IMR-90 (cell line): ENCODE measurements at regions of chr12 and their contacts with region 1.

Region 1: DNA sequence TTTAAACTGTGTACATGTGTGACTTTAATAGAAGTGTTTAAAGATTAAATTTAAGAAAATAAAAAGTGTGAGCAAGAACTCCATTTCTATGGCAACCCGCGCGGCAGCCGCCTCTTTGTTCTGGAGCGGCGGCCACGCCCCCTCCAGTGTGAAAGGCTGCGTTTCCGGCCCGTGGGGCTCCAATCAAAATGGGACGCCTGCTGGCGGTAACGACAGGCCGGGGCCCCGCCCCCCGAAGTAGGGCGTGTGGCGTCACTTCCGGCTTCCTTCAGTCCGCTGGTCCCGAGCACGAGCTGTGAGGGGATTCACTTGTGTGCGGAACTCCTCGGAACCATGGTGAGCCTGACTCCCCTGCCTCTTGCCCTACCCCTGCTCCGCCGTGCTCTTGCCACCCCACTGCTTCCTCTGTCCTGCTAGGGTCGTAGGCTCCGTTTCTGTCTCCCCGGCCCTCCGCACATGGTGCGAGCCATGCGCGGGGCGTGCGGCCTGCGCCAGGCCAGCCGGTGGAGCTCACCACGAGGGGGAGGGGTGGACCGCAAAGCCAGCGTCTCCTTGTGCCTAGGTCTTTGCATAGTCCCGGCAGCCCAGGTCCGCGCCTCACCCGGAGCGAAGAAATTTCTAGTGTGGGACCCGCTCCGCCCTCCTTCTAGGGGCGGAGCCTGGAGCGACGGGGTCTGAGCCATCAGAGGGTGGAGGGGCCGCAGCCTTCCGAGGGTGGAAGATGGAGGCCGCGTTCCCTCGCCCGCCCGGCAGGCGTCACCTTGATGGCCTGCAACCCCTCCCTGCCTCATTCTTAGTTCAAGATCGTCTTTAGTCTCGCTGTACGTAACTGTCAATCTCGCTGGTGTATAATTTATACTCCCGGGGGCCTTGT is at the start of gene CCT2:
- DNase-seq: peak; percentile 94
- ATAC-seq: peak; percentile 97
- H3K4me3 ChIP-seq: peak within 1 kb of the TSS; percentile 52
- H3K27ac ChIP-seq: peak within 1 kb of the TSS; percentile 60
- H3K4me1 ChIP-seq: no peaks in the 10 kb centered on the region
- H3K27me3 ChIP-seq: no peaks in the 10 kb centered on the region
- CTCF ChIP-seq: peak; percentile 45
- POLR2A ChIP-seq: peak; percentile 96
- RAD21 ChIP-seq: peak; percentile 44
- total RNA-seq, gene CCT2: 565 and 651 TPM in 2 replicates

Region 2: GRCh38 chr12:68831272-68831671 is 754.2 kb before region 1 on chr12:
- CTCF ChIA-PET with region 1: no interaction called
- POLR2A ChIA-PET with region 1: no interaction called
- dilution Hi-C with region 1: no loop called
- in situ Hi-C with region 1: loop called (anchors 25 kb)
- intact Hi-C with region 1: no loop called
- DNase-seq: no peak
- ATAC-seq: no peak
- H3K4me3 ChIP-seq: no peak overlapping the region
- H3K27ac ChIP-seq: no peak overlapping the region
- H3K4me1 ChIP-seq: peaks cover 2% of the 10 kb centered on the region
- H3K27me3 ChIP-seq: no peaks in the 10 kb centered on the region
- CTCF ChIP-seq: no peak
- POLR2A ChIP-seq: no peak
- RAD21 ChIP-seq: no peak

Region 3: GRCh38 chr12:69196302-69197288 is 388.8 kb before region 1 on chr12:
- CTCF ChIA-PET with region 1: no interaction called
- POLR2A ChIA-PET with region 1: no interaction called
- dilution Hi-C with region 1: no loop called
- in situ Hi-C with region 1: no loop called
- intact Hi-C with region 1: no loop called
- DNase-seq: peak; percentile 9
- ATAC-seq: peak; percentile 51
- H3K4me3 ChIP-seq: no peak overlapping the region
- H3K27ac ChIP-seq: no peak overlapping the region
- H3K4me1 ChIP-seq: no peaks in the 10 kb centered on the region
- H3K27me3 ChIP-seq: no peaks in the 10 kb centered on the region
- CTCF ChIP-seq: peak; percentile 23; the same call in 1 of the 2 replicates
- POLR2A ChIP-seq: no peak
- RAD21 ChIP-seq: 0 out of 2 replicates have a peak, but pooled peaks have one; percentile 13

Region 4: DNA sequence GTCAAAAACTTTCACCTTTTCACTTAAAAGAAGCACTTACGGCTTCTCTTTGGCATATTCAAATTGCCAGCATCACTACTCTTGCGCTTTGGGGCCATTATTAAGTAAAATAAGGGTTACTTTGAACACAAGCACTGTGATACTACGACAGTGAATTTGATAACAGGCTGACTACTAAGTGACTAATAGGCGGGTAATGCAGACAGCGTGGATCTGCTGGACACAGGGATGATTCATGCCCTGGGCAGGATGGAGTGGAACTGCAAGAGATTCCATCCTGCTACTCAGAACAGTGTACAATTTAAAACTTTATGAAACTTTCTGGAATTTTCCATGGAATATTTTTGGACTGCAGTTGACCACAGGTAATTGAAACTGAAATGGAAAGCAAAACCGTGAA is 180.0 kb before region 1 on chr12:
- CTCF ChIA-PET with region 1: no interaction called
- POLR2A ChIA-PET with region 1: no interaction called
- dilution Hi-C with region 1: no loop called
- in situ Hi-C with region 1: no loop called
- intact Hi-C with region 1: no loop called
- DNase-seq: peak; percentile 98
- ATAC-seq: peak; percentile 99
- H3K4me3 ChIP-seq: no peak overlapping the region; the same call in 1 of the 2 replicates
- H3K27ac ChIP-seq: no peak overlapping the region
- H3K4me1 ChIP-seq: peaks cover 7% of the 10 kb centered on the region
- H3K27me3 ChIP-seq: no peaks in the 10 kb centered on the region
- CTCF ChIP-seq: no peak
- POLR2A ChIP-seq: no peak
- RAD21 ChIP-seq: no peak

Region 5: DNA sequence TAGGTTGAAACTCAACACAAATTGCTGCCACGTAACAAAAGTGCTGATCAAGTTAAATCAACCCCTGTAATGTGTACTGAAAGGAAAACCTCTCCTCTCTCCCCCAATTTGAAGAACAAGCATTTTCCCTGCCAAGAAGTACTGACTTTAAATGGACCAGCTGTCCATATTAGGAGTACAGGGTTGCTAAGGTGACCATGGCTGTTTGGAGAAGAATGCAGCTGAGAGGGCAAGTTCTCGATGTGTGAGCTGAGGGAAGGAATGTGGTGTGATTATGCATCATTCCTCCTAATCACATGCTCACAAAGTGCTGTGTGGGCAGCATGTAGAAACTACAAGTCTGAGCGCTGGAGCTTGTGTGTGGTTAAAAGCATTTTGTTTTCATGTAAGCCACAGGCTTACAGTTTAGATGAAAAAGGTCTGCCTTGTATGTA is 51.0 kb before region 1 on chr12:
- CTCF ChIA-PET with region 1: no interaction called
- POLR2A ChIA-PET with region 1: no interaction called
- dilution Hi-C with region 1: no loop called
- in situ Hi-C with region 1: no loop called
- intact Hi-C with region 1: no loop called
- DNase-seq: peak; percentile 100
- ATAC-seq: peak; percentile 99
- H3K4me3 ChIP-seq: no peak overlapping the region
- H3K27ac ChIP-seq: peak overlapping the region; percentile 12; the same call in 1 of the 2 replicates
- H3K4me1 ChIP-seq: no peaks in the 10 kb centered on the region; the same call in 1 of the 2 replicates
- H3K27me3 ChIP-seq: no peaks in the 10 kb centered on the region
- CTCF ChIP-seq: no peak
- POLR2A ChIP-seq: peak; percentile 70
- RAD21 ChIP-seq: no peak; the same call in 1 of the 2 replicates